ENCODE measurements at regions of chr1 and their contacts with region 1.

Region 1: DNA sequence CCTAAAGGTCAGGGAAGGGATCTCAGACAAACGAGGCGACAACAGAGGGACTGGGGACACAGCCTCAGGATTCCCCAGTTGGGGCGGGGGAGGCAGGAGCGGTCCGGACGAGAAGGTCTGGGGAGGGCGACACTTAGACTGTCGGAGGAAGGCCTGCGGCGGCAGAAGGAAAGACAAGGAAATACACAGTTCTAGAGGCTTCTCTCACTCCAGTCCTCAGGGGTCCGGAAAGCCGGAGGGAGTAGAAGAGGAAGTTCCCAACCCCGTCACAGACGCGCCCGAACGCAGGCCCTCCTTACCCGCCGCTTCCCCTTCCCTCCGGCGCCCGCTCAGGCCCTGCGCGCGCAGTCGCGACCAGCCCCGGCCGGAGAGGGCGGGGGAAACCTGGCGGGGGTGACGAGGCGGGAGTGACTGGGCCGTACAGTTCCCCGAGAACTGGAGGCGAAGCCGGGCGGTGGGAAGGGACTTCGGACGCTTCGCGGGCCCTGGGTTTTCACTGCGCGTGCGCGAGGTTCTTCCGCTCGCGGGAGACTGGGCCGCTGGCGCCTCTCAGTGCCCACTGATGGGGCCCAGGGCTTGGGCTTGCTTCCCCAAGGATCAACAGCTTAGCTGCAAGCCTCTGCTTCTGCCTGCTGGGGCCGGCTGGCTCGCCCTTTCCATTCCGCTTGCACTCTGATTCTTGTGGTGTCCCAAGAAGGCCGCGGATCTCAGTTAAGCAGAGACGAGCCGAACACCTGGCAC is at the start of gene IPP:
- DNase-seq: peak; percentile 84 to 98
- H3K4me3 ChIP-seq: peak within 1 kb of the TSS; percentile 68 to 82
- H3K27ac ChIP-seq: peak within 1 kb of the TSS; percentile 90 to 98
- H3K4me1 ChIP-seq: peaks cover 3 to 13% of the 10 kb centered on the region in 2 donors
- H3K27me3 ChIP-seq: no peaks in the 10 kb centered on the region
- CTCF ChIP-seq: peak in 2 of 3 experiments; percentile 8 to 33
- total RNA-seq, gene IPP: 5.5 TPM

Region 2: DNA sequence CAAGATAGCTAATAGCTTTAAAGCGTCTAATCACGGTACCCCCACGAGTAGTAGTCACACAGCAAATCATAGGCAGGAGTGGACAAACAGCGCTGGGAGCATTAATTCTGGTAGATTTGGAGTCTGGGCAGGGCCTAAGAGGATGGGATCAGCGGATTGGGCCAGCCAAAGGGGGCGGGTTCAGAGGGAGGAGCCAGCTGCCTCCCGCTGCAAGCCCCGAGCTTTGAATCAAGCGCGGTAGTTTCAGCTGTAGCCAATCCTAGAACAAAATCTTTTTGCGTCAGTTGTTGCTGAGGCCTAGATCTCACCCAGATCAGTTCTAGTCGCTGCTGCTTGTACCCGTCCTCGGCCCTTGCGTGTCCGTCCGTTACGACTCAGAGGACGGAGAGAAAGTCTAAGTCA is 167.2 kb before region 1 on chr1:
- intact Hi-C with region 1: loop called (anchors 5 kb)
- DNase-seq: peak; percentile 87 to 97
- H3K4me3 ChIP-seq: peak overlapping the region; percentile 84 to 89
- H3K27ac ChIP-seq: peak overlapping the region; percentile 89 to 90
- H3K4me1 ChIP-seq: peaks cover 0 to 14% of the 10 kb centered on the region in 2 donors
- H3K27me3 ChIP-seq: no peaks in the 10 kb centered on the region
- CTCF ChIP-seq: no peak

Region 3: GRCh38 chr1:45617618-45618017 is 132.8 kb before region 1 on chr1:
- intact Hi-C with region 1: no loop called
- DNase-seq: no peak
- H3K4me3 ChIP-seq: no peak overlapping the region
- H3K27ac ChIP-seq: no peak overlapping the region
- H3K4me1 ChIP-seq: peaks cover 0 to 3% of the 10 kb centered on the region in 2 donors
- H3K27me3 ChIP-seq: no peaks in the 10 kb centered on the region
- CTCF ChIP-seq: no peak

Region 4: DNA sequence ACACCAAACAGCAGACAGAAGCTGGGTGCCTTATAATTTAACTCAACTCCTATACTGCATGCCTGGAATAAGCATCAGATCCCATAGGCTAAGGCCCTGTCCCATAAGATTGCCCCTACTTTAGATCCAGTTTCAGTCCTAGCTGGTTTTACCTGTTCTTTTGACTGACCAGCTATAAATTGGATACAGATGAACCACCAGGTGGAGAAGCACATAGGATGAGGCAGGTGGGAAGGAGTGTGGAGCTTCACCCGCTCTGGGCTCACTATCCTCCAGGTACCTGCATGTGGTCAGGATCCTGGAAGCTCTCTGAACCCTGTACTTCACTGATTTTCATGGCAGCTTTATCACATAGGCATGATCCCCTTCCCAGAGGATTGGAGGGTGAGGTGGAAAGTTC is 104.3 kb after region 1 on chr1:
- intact Hi-C with region 1: no loop called
- DNase-seq: no peak
- H3K4me3 ChIP-seq: no peak overlapping the region
- H3K27ac ChIP-seq: no peak overlapping the region
- H3K4me1 ChIP-seq: no peaks in the 10 kb centered on the region
- H3K27me3 ChIP-seq: no peaks in the 10 kb centered on the region
- CTCF ChIP-seq: no peak

Region 5: DNA sequence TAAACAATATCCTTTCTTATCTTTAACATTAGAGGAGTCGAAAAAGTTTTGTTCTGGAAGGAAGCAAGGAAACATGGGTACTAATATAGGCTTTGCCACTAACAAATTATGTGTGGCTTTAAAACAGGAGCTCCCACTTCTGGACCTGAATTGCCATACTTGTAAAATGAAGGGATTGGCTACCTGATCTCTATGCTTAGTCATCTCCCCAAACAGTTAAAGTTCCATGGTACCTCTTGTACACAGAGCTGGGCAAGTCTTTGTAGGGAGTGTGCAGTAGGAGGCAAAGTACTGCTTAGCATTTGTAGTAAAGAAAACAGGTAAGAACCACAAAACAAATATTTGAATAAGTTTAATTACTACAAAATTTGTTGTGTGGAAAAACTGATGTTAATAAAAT is 134.2 kb after region 1 on chr1:
- intact Hi-C with region 1: loop called (anchors 5 kb)
- DNase-seq: no peak
- H3K4me3 ChIP-seq: no peak overlapping the region
- H3K27ac ChIP-seq: no peak overlapping the region
- H3K4me1 ChIP-seq: no peaks in the 10 kb centered on the region
- H3K27me3 ChIP-seq: no peaks in the 10 kb centered on the region
- CTCF ChIP-seq: no peak